ENCODE measurements at regions of chr20 and their contacts with region 1.

Region 1: DNA sequence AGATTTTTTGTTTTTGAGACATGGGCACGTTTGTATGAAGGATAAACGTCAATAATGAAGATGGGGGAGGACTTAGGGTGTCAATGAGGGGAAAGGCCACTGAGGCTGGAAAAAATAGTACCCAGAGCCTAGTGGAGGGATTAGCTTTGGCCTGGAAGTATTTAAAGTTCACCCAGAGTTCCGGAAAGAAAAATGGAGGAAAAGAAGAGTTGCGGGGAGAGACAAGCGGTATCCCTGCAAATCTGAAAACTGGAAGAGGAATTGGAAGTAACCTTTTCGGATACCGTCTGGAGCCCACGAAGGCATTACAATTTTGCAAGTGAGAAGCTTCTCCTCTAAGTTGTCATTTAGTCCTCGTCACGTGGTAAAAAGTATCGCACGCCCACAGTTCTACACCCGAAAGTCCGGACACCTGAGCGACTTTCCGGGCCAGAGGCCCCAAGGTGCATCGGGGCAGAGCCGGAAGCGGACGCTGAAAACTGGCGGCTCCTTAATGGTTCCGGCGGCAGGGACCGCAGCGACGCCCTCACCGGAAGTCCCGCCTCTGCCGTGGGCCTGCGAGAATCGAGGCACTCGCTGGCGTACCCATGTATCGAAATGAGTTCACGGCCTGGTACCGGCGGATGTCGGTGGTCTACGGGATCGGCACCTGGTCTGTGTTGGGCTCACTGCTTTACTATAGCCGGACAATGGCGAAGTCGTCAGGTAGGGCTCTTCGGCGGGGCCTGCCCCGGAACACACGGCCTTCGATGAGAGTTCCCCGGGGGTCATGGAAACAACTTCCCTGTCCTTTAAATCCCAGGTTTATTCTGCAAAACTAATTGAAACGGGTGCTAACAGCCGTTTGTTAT is at the start of gene SMIM26:
- DNase-seq: peak; percentile 95
- H3K4me3 Mint-ChIP-seq: peak within 1 kb of the TSS; percentile 94
- H3K27ac Mint-ChIP-seq: peak within 1 kb of the TSS; percentile 95
- H3K4me1 Mint-ChIP-seq: peaks cover 19% of the 10 kb centered on the region
- H3K27me3 Mint-ChIP-seq: no peaks in the 10 kb centered on the region
- total RNA-seq, gene SMIM26: 57.3 to 60.0 TPM

Region 2: GRCh38 chr20:18466894-18467730 is 100.0 kb before region 1 on chr20 and contains the starts of genes DZANK1 and POLR3F:
- CTCF ChIA-PET with region 1: no interaction called
- intact Hi-C with region 1: loop called (anchors 1 kb)
- DNase-seq: peak; percentile 94
- H3K4me3 Mint-ChIP-seq: peak within 1 kb of the TSS; percentile 92
- H3K27ac Mint-ChIP-seq: peak within 1 kb of the TSS; percentile 84
- H3K4me1 Mint-ChIP-seq: peaks cover 32% of the 10 kb centered on the region
- H3K27me3 Mint-ChIP-seq: no peaks in the 10 kb centered on the region
- total RNA-seq, gene DZANK1: 0.79 to 0.94 TPM
- total RNA-seq, gene POLR3F: 7.0 to 8.3 TPM

Region 3: DNA sequence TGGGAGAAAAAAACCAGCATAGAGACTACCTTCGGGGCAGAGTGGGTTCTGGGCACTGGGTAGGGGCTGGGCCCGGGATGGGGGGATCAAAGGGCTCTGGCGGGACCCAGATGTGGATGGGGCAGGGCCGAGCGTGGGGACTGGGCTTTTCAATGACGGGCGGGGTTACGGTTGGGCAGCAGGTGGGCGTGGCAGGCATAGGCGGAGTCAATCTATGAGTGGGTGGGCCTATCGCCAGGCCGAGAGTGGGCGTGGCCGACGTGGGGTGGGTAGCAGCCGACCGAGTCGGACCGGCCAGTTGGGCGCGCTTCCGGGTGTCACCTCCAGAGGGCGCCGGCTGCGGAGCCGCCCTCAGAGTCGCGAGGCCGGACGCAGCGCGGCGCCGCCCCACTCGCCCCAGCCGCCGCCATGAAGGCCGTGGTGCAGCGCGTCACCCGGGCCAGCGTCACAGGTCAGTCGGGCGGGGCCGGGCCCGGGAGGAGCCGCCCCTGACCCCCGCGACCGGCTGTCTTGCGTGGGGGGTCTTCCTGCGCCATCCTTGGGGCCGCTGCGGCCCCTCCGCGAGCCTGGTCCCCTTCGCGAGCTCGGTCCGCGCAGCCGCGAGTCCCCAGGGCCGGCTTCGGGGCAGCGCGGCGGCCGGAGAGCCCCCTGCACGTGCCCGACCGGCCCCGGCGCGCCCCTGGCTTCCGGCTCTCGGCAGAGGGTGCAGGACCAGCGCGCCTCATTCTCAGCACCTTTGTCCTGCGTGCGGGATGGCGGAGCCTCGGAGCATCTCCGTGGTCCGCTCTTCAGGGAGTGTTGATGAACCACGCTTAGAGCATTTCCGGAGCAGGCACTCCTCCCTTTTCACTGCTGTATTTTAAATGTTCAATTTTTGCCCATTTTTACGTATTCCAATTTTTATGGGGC is 20.8 kb after region 1 on chr20 and contains the start of gene DTD1:
- CTCF ChIA-PET with region 1: interaction called, 3 read pairs
- intact Hi-C with region 1: loop called (anchors 1 kb)
- DNase-seq: peak; percentile 89
- H3K4me3 Mint-ChIP-seq: peak within 1 kb of the TSS; percentile 87
- H3K27ac Mint-ChIP-seq: peak within 1 kb of the TSS; percentile 59
- H3K4me1 Mint-ChIP-seq: peaks cover 23% of the 10 kb centered on the region
- H3K27me3 Mint-ChIP-seq: no peaks in the 10 kb centered on the region
- total RNA-seq, gene DTD1: 46.4 to 47.1 TPM

Region 4: GRCh38 chr20:20017001-20017843 is 1450.1 kb after region 1 on chr20 and contains the start of gene NAA20:
- CTCF ChIA-PET with region 1: no interaction called
- intact Hi-C with region 1: loop called (anchors 5 kb)
- DNase-seq: peak; percentile 93
- H3K4me3 Mint-ChIP-seq: peak within 1 kb of the TSS; percentile 88
- H3K27ac Mint-ChIP-seq: peak within 1 kb of the TSS; percentile 90
- H3K4me1 Mint-ChIP-seq: peaks cover 54% of the 10 kb centered on the region
- H3K27me3 Mint-ChIP-seq: no peaks in the 10 kb centered on the region
- total RNA-seq, gene NAA20: 59.5 to 65.5 TPM